ENCODE measurements at regions of chr11 and their contacts with region 1.

Region 1: GRCh38 chr11:59142530-59143507 is at the start of gene FAM111A:
- DNase-seq: peak; percentile 90 to 95 (median 92)
- ATAC-seq: peak; percentile 92
- H3K4me3 ChIP-seq: peak within 1 kb of the TSS; percentile 63
- H3K4me1 ChIP-seq: peaks cover 31% of the 10 kb centered on the region
- CTCF ChIP-seq: no peak
- total RNA-seq, gene FAM111A: 33.6 to 36.0 (median 35.6) TPM

Region 2: GRCh38 chr11:59053387-59053786 is 89.4 kb before region 1 on chr11:
- intact Hi-C with region 1: no loop called
- DNase-seq: peak; percentile 62 to 83 (median 72)
- ATAC-seq: peak; percentile 62
- H3K4me3 ChIP-seq: no peak overlapping the region
- H3K4me1 ChIP-seq: no peaks in the 10 kb centered on the region
- CTCF ChIP-seq: peak; percentile 53

Region 3: DNA sequence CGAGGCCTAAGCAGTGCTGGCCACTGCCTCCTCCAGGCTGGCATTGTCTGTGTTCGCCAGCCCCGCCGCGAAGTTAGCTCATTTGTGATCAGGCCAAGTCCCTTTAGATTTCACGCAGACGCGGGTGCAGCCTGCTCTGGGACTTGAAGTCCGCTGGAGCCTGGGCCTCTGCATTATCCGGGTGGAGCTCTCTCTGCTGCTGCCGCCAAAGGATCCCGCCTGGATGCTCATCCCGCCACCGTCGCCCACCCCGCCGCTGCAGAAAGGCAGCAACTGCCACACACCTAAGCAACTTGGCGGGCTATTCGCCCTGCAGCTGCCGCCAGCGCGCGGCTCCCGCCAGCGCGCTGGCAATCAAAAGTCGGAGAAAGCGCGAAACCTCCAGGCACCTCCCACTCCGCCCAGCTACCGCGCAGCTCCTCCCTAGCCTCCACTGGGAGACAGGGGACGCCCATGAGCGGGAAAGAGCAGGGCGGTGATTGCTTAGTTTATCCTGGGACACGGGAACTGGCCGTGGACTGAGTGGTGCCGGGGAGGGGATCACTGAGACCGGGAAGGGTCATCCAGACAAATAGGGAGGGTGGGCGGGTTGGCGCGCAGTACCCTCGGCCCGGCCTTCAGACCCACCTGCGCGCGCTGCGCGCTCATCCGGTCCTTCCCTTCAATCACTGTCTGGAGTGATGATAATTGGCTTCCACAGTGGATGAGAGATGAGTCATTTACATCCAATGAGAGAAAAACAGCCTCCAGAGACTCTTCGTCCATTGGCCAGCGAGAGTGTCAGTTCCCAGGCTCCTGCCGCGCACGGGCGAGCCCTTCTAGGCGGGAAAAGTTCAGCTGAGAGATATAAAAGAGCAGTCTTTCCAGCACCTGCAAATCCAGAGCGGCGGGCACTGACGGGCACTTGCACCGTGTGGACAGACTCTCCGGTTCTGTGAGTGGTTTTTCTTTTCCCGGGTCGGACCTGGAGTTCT is 36.2 kb before region 1 on chr11 and contains the start of gene FAM111B:
- intact Hi-C with region 1: loop called in 1 of 2 experiments (anchors 5 kb)
- DNase-seq: peak; percentile 88 to 91 (median 89)
- ATAC-seq: peak; percentile 96
- H3K4me3 ChIP-seq: peak within 1 kb of the TSS; percentile 16
- H3K4me1 ChIP-seq: peaks cover 15% of the 10 kb centered on the region
- CTCF ChIP-seq: no peak
- total RNA-seq, gene FAM111B: 1.8 to 7.8 (median 2.5) TPM

Measured in mucosa of descending colon (tissue), 3 donors.